ENCODE measurements at regions of chr17 and their contacts with region 1.

Region 1: DNA sequence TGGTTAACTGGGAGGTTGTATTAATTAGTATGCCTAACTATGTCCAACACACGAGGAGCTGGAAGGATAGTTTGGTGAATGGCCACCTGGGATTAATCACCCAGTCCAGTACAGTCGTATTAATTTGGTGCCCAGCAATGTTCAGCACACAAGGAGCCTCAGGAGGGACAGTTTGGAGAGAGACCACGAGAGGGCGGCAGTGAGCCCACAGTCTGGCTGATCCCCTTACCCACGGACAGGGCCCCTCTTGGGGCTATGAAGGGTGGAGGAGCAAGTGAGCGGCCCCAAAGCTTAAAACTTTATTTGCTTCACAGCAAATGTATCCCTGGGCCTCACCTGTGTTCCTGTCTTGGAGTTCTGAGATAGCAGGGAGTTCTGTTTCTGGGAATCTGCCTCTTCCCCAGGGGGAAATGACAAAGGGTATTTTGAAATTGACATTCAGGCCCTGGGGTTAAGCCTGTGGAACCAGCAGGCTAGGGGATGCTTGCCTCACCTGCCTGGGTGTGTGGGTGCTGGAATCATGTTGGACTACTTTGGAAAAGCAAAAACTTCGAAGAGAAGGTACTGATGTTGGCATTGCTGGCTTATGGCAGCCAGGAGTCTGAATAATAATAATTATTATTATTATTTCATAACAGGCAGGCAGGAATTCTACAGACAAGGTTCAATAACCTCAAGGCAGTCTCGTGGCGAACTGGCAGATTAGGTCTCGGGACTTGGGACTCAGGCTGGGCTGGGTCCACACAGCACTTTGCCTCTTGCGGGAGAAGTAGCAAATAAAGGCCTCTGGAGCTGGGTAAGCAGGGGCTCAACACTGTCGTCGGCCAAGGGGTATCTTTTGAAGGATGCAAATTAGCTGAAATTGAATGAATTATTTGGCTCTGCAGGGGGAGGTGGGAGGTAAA is 227.6 kb upstream of the ASIC2 start:
- DNase-seq: peak; percentile 33 to 95
- H3K4me3 ChIP-seq: no peak overlapping the region
- H3K27ac ChIP-seq: no peak overlapping the region
- H3K4me1 ChIP-seq: peaks cover 0 to 3% (median under 1%) of the 10 kb centered on the region in 4 experiments; a peak in 1 of 7 replicates
- H3K27me3 ChIP-seq: no peaks in the 10 kb centered on the region; a peak in 1 of 7 replicates
- CTCF ChIP-seq: peak; percentile 81 to 87 (median 82)
- EP300 ChIP-seq: no peak
- POLR2A ChIP-seq: no peak
- RAD21 ChIP-seq: peak; percentile 69 to 73

Region 2: DNA sequence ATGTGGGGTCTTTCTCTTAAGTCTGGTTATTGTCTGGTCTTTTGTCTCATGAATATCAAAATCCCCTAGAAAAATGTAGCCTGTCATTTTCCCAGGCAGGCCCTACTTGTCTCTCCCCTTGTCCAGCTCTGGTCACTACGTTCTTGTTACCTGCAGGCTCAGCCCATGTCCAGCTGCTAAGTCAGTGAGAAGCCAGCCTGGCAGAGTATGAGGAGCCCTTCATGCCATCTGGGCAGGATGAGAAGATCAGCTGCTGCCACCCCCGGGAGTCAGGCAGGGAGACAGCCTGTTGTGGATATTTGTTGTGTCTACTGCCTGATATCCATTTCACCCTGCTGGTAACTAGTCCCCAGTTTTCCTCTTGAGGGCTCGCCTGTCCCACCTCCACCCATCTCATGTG is 316.5 kb before region 1 on chr17:
- CTCF ChIA-PET with region 1: no interaction called
- POLR2A ChIA-PET with region 1: no interaction called
- DNase-seq: no peak
- H3K4me3 ChIP-seq: no peak overlapping the region
- H3K27ac ChIP-seq: no peak overlapping the region
- H3K4me1 ChIP-seq: no peaks in the 10 kb centered on the region
- H3K27me3 ChIP-seq: peaks cover 0 to 7% (median 0%) of the 10 kb centered on the region in 4 experiments; a peak in 4 of 7 replicates
- CTCF ChIP-seq: no peak
- EP300 ChIP-seq: no peak
- POLR2A ChIP-seq: no peak
- RAD21 ChIP-seq: no peak

Region 3: DNA sequence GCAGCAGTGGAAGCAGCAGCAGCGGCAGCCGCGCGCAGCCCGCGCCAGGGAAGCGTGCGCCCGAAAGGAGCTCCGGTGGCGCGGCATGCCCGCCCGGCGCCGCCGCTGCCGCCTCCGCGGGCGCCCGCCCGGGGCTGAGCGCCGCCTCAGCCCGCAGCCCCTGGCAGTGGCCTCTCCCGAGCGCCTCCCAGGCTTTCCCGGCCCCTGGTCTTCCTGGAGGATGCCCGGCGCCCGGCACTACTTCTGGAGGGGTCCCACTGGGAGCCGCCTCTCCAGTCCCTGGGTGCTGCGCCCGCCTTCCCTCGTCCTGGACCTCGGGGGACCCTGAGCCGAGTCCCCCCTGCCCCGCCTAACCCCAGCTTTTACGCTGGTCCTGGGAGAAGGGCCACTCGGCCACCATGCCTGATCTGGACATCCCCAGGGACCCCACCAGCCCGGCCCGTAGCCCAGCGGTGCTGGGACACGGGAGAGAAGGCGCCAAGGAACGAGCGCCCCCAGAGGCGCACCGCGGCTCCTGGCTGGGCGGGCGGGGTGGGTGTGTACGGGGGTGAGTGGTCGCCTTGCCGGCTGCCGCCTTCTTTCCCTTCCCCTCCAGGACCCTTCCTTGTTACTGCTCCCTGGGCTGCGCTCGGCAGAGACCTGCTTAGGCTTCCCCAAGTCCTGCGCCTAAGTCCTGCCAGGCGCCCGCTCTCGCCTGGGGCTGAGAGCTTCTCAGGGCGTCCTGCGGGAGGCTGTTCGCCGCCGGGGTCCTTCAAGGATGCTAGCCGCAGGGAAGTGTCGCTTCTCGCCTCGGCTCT is 228.3 kb before region 1 on chr17:
- CTCF ChIA-PET with region 1: interaction called, 56 read pairs
- POLR2A ChIA-PET with region 1: no interaction called
- DNase-seq: peak; percentile 21 to 78
- H3K4me3 ChIP-seq: peak overlapping the region; percentile 26 to 68 (median 52)
- H3K27ac ChIP-seq: no peak overlapping the region
- H3K4me1 ChIP-seq: peaks cover 0 to 6% (median 2%) of the 10 kb centered on the region in 4 experiments; a peak in 1 of 7 replicates
- H3K27me3 ChIP-seq: peaks cover 25 to 70% (median 62%) of the 10 kb centered on the region in 4 experiments
- CTCF ChIP-seq: peak; percentile 38 to 63 (median 52)
- EP300 ChIP-seq: no peak
- POLR2A ChIP-seq: no peak
- RAD21 ChIP-seq: peak; percentile 22 to 51; a peak in 2 of 4 replicates

Region 4: GRCh38 chr17:33494151-33494550 is 26.5 kb before region 1 on chr17:
- CTCF ChIA-PET with region 1: interaction called, 22 read pairs
- POLR2A ChIA-PET with region 1: no interaction called
- DNase-seq: no peak
- H3K4me3 ChIP-seq: no peak overlapping the region
- H3K27ac ChIP-seq: no peak overlapping the region
- H3K4me1 ChIP-seq: 0 out of 7 replicates have a peak, but pooled peaks cover 0 to 3% (median 0%) of the 10 kb centered on the region in 4 experiments
- H3K27me3 ChIP-seq: no peaks in the 10 kb centered on the region
- CTCF ChIP-seq: no peak
- EP300 ChIP-seq: no peak
- POLR2A ChIP-seq: no peak
- RAD21 ChIP-seq: no peak

Region 5: DNA sequence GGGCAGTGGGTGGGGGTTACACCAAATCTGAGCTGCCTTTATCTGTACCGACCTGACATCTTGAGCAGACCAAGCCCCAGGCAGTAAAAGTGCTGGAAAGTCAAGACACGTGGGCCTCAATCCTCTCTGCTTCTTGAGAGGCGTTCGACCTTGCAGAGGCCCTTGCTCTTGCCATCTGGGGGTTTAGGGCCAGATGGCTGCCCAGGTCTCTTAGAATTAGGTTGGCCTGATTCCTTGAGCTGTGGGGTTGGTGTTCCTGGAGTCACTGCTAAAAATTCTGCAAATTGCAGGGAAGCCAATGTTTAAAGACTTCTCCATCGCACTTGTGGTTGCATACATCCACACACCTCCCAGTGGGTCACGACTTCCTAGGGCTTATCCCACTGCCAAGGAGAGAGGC is 10.6 kb after region 1 on chr17:
- CTCF ChIA-PET with region 1: interaction called, 74 read pairs
- POLR2A ChIA-PET with region 1: no interaction called
- DNase-seq: no peak
- H3K4me3 ChIP-seq: no peak overlapping the region
- H3K27ac ChIP-seq: no peak overlapping the region
- H3K4me1 ChIP-seq: peaks cover 0 to 3% (median 0%) of the 10 kb centered on the region in 4 experiments; a peak in 1 of 7 replicates
- H3K27me3 ChIP-seq: no peaks in the 10 kb centered on the region; a peak in 1 of 7 replicates
- CTCF ChIP-seq: no peak
- EP300 ChIP-seq: no peak
- POLR2A ChIP-seq: no peak
- RAD21 ChIP-seq: no peak

Region 6: GRCh38 chr17:33657181-33657580 is 136.5 kb after region 1 on chr17:
- CTCF ChIA-PET with region 1: interaction called, 20 read pairs
- POLR2A ChIA-PET with region 1: no interaction called
- DNase-seq: no peak
- H3K4me3 ChIP-seq: no peak overlapping the region
- H3K27ac ChIP-seq: no peak overlapping the region
- H3K4me1 ChIP-seq: peaks cover 0 to 2% (median 0%) of the 10 kb centered on the region in 4 experiments; a peak in 1 of 7 replicates
- H3K27me3 ChIP-seq: peaks cover 0 to 2% (median 0%) of the 10 kb centered on the region in 4 experiments; a peak in 1 of 7 replicates
- CTCF ChIP-seq: no peak
- EP300 ChIP-seq: no peak
- POLR2A ChIP-seq: no peak
- RAD21 ChIP-seq: no peak